ENCODE measurements at regions of chr11 and their contacts with region 1.

Region 1: GRCh38 chr11:31107062-31107461 is 262.5 kb downstream of the DCDC1 start:
- DNase-seq: peak; percentile 58 to 75
- H3K4me3 ChIP-seq: no peak overlapping the region
- H3K4me3 Mint-ChIP-seq: no peak overlapping the region
- H3K27ac Mint-ChIP-seq: no peak overlapping the region
- H3K4me1 ChIP-seq: no peaks in the 10 kb centered on the region
- H3K4me1 Mint-ChIP-seq: peaks cover 8% of the 10 kb centered on the region
- H3K27me3 ChIP-seq: no peaks in the 10 kb centered on the region
- H3K27me3 Mint-ChIP-seq: peaks cover 7% of the 10 kb centered on the region
- CTCF ChIP-seq: peak; percentile 81 to 84

Region 2: GRCh38 chr11:30960387-30960992 is 146.6 kb before region 1 on chr11:
- CTCF ChIA-PET with region 1: interaction called, 5 read pairs
- POLR2A ChIA-PET with region 1: no interaction called
- intact Hi-C with region 1: loop called (anchors 1 kb)
- DNase-seq: peak in 1 of 2 experiments; percentile 43
- H3K4me3 ChIP-seq: no peak overlapping the region
- H3K4me3 Mint-ChIP-seq: no peak overlapping the region
- H3K27ac Mint-ChIP-seq: no peak overlapping the region
- H3K4me1 ChIP-seq: no peaks in the 10 kb centered on the region
- H3K4me1 Mint-ChIP-seq: no peaks in the 10 kb centered on the region
- H3K27me3 ChIP-seq: no peaks in the 10 kb centered on the region
- H3K27me3 Mint-ChIP-seq: peaks cover 7% of the 10 kb centered on the region
- CTCF ChIP-seq: peak; percentile 62 to 78

Region 3: GRCh38 chr11:31060880-31061279 is 46.2 kb before region 1 on chr11:
- CTCF ChIA-PET with region 1: no interaction called
- POLR2A ChIA-PET with region 1: no interaction called
- intact Hi-C with region 1: no loop called
- DNase-seq: no peak
- H3K4me3 ChIP-seq: no peak overlapping the region
- H3K4me3 Mint-ChIP-seq: no peak overlapping the region
- H3K27ac Mint-ChIP-seq: no peak overlapping the region
- H3K4me1 ChIP-seq: peaks cover 6% of the 10 kb centered on the region; the same call in 1 of the 2 replicates
- H3K4me1 Mint-ChIP-seq: peaks cover 18% of the 10 kb centered on the region
- H3K27me3 ChIP-seq: no peaks in the 10 kb centered on the region
- H3K27me3 Mint-ChIP-seq: no peaks in the 10 kb centered on the region
- CTCF ChIP-seq: no peak

Region 4: DNA sequence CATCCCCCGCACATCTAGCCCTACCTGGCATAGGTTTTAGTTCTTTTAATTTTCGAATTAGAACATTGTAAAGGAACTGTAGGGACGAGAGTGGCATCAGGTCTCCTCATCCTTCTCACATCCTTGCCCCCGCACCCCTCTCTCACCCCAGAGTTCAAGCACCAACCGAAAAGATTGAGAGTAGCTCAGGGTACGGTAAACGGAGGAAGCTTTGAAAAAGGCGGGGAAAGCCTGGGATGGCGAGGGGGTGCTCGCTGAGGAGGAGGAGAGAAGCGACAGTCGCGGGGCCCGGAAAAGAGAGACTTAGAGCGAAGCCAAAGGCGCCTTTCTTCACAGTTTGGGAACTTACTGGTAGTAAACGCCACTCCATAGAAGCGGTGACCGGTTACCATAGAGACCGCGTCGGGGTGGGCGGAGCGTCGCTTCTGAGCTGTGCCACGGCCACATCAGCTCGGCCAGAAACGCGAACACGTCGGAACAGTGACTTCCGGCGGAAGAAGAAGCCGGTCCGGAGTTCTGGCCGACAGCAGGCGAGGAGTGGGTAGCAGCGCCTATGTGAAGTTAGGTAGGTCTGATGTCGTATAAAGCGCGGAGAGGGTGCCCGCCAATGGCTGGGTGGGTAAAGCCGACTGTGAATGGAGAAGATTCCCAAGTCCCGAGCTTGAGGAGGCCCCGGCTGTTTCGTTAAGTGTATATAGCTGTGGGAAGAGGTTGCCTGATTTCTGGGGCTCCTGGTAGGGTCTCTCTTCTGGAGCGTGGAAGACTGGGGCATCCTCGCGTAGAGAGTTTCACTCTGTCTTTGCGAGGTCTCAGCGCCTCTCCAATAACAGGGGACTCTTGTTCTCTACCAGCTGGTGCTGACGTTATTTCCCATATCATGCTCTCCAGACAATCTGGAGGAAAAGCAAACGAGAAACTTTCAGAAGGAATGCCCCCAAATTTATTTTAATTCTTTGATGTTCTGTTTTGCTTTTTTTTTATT is 262.6 kb after region 1 on chr11 and contains the starts of genes DCDC1 and DNAJC24:
- CTCF ChIA-PET with region 1: interaction called, 11 read pairs
- POLR2A ChIA-PET with region 1: no interaction called
- intact Hi-C with region 1: no loop called
- DNase-seq: peak; percentile 91 to 92
- H3K4me3 ChIP-seq: peak within 1 kb of the TSS; percentile 79
- H3K4me3 Mint-ChIP-seq: peak within 1 kb of the TSS; percentile 91
- H3K27ac Mint-ChIP-seq: peak within 1 kb of the TSS; percentile 90
- H3K4me1 ChIP-seq: no peaks in the 10 kb centered on the region
- H3K4me1 Mint-ChIP-seq: no peaks in the 10 kb centered on the region
- H3K27me3 ChIP-seq: no peaks in the 10 kb centered on the region
- H3K27me3 Mint-ChIP-seq: peaks cover 8% of the 10 kb centered on the region
- CTCF ChIP-seq: no peak
- total RNA-seq, gene DCDC1: 0.19 TPM in 1 of 2 replicates, not detected in the other
- total RNA-seq, gene DNAJC24: 13.4 and 14.8 TPM in 2 replicates

Region 5: DNA sequence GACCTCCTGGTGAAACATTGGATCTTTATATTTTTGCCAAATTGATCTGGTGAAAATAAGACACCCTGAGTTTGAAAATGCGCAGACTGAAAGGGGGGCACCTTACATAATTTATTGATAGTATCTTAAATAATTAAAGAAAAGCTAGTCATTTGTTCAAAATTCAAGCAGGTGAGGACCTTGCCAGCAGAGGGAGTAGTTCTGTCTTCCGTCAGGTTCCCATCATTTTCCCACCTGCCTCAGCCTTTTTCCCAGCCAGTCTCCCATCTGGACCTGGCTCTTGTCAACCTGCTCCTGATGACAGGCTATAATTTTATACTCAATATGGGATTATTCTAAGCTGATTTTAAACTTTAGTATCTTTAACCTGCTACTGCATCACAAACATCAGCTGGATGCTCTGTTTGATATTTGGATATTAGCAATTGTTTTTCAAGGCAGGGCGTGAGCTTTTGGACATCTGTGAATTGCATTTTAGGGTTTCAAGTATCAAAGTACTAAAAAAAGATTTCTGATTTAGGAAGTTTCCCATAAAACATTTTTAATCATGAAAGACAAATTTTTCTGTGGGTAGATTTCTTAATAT is 534.5 kb after region 1 on chr11:
- CTCF ChIA-PET with region 1: interaction called, 4 read pairs
- POLR2A ChIA-PET with region 1: no interaction called
- intact Hi-C with region 1: loop called (anchors 5 kb)
- DNase-seq: peak; percentile 51
- H3K4me3 ChIP-seq: no peak overlapping the region
- H3K4me3 Mint-ChIP-seq: no peak overlapping the region
- H3K27ac Mint-ChIP-seq: no peak overlapping the region
- H3K4me1 ChIP-seq: no peaks in the 10 kb centered on the region
- H3K4me1 Mint-ChIP-seq: no peaks in the 10 kb centered on the region
- H3K27me3 ChIP-seq: no peaks in the 10 kb centered on the region
- H3K27me3 Mint-ChIP-seq: no peaks in the 10 kb centered on the region
- CTCF ChIP-seq: peak; percentile 60 to 66

Region 6: GRCh38 chr11:32006799-32007388 is 899.8 kb after region 1 on chr11:
- CTCF ChIA-PET with region 1: no interaction called
- POLR2A ChIA-PET with region 1: no interaction called
- intact Hi-C with region 1: loop called (anchors 2 kb)
- DNase-seq: peak in 1 of 2 experiments; percentile 44
- H3K4me3 ChIP-seq: no peak overlapping the region
- H3K4me3 Mint-ChIP-seq: no peak overlapping the region
- H3K27ac Mint-ChIP-seq: no peak overlapping the region
- H3K4me1 ChIP-seq: no peaks in the 10 kb centered on the region
- H3K4me1 Mint-ChIP-seq: no peaks in the 10 kb centered on the region
- H3K27me3 ChIP-seq: peaks cover 2% of the 10 kb centered on the region
- H3K27me3 Mint-ChIP-seq: peaks cover 21% of the 10 kb centered on the region
- CTCF ChIP-seq: peak; percentile 34 to 71

Measured in Caco-2 (cell line).